ENCODE measurements at regions of chr1 and their contacts with region 1.

Region 1: GRCh38 chr1:74652597-74653139 is 20.9 kb downstream of the ERICH3 start:
- DNase-seq: peak; percentile 24
- CTCF ChIP-seq: no peak

Region 2: DNA sequence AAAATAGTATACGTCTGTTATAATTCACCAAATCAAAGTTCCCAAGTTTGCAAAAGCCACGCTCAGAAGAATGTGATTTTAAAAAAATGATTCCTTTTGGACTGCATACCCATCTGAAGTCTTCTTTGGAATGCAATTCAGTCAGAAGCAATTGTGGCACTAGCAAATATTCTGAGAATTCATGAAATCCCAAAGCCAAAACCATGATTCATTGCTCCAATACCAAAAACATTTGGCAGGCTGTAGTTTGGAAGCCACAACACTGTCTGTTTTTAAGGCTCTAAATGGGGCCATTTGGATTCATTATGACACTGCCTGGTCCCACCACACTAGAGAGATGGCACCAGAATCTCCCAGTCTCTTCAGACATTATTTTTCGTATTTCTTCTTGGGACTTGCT is 118.4 kb before region 1 on chr1:
- CTCF ChIA-PET with region 1: no interaction called
- POLR2A ChIA-PET with region 1: no interaction called
- DNase-seq: no peak
- CTCF ChIP-seq: no peak

Region 3: GRCh38 chr1:74641161-74641560 is 11.5 kb before region 1 on chr1:
- CTCF ChIA-PET with region 1: interaction called, 12 read pairs
- POLR2A ChIA-PET with region 1: no interaction called
- DNase-seq: no peak
- CTCF ChIP-seq: no peak

Region 4: DNA sequence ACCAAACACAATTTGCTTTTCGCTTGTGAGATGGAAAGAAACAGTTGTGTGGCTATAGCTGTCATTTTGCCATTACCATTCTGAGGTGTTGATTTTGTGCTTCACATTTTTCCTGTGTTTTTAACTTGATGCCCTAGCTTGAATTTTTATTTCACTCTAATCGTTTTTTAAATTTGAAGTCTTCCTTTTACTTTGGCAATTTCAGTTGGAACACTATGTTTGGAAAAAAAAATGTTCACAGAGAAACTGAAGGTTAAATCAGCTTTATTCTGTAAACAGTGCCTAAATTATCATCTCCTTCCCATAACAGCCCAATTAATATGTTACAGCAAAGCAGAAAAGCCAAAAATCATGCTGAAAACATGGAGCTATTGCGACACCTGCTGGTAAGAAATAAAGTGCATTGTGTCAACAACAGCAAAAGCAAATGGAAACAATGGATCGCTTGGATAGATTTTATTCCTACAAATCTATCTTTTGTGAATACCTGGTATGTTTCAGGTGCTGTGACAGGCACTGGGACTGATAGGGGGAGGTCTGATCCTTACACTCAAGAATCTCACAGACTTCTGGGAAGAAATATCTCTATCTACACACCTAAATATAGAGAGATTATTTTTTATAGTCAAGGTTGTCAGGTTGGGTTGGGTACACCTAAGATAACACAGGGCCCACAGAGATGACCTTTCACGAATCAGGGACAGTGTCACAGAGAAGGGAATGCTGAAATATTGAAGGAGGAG is 37.1 kb after region 1 on chr1:
- CTCF ChIA-PET with region 1: interaction called, 11 read pairs
- POLR2A ChIA-PET with region 1: no interaction called
- DNase-seq: peak; percentile 18
- CTCF ChIP-seq: peak; percentile 84

Region 5: GRCh38 chr1:74790453-74790852 is 137.8 kb after region 1 on chr1:
- CTCF ChIA-PET with region 1: no interaction called
- POLR2A ChIA-PET with region 1: no interaction called
- DNase-seq: no peak
- CTCF ChIP-seq: no peak

Region 6: GRCh38 chr1:74858136-74858535 is 205.5 kb after region 1 on chr1:
- CTCF ChIA-PET with region 1: no interaction called
- POLR2A ChIA-PET with region 1: no interaction called
- DNase-seq: no peak
- CTCF ChIP-seq: no peak

Measured in GM10248 (cell line).